Caco-2 (cell line): ENCODE measurements at regions of chr1 and their contacts with region 1.

Region 1: GRCh38 chr1:211752951-211753486 is 77.5 kb downstream of the LPGAT1 start:
- DNase-seq: no peak
- H3K4me3 ChIP-seq: no peak overlapping the region
- H3K4me3 Mint-ChIP-seq: no peak overlapping the region
- H3K27ac Mint-ChIP-seq: no peak overlapping the region
- H3K4me1 ChIP-seq: peaks cover 55% of the 10 kb centered on the region
- H3K4me1 Mint-ChIP-seq: peaks cover 41% of the 10 kb centered on the region
- H3K27me3 ChIP-seq: no peaks in the 10 kb centered on the region
- H3K27me3 Mint-ChIP-seq: no peaks in the 10 kb centered on the region
- CTCF ChIP-seq: no peak

Region 2: GRCh38 chr1:211830330-211831142 is 77.5 kb after region 1 on chr1 and contains the start of gene LPGAT1:
- CTCF ChIA-PET with region 1: interaction called, 3 read pairs
- POLR2A ChIA-PET with region 1: no interaction called
- intact Hi-C with region 1: loop called (anchors 5 kb)
- DNase-seq: peak; percentile 70 to 87
- H3K4me3 ChIP-seq: peak within 1 kb of the TSS; percentile 56
- H3K4me3 Mint-ChIP-seq: peak within 1 kb of the TSS; percentile 96
- H3K27ac Mint-ChIP-seq: peak within 1 kb of the TSS; percentile 76
- H3K4me1 ChIP-seq: no peaks in the 10 kb centered on the region
- H3K4me1 Mint-ChIP-seq: peaks cover 5% of the 10 kb centered on the region
- H3K27me3 ChIP-seq: no peaks in the 10 kb centered on the region
- H3K27me3 Mint-ChIP-seq: no peaks in the 10 kb centered on the region
- CTCF ChIP-seq: peak; percentile 49 to 55
- total RNA-seq, gene LPGAT1: 25.6 and 34.0 TPM in 2 replicates

Region 3: DNA sequence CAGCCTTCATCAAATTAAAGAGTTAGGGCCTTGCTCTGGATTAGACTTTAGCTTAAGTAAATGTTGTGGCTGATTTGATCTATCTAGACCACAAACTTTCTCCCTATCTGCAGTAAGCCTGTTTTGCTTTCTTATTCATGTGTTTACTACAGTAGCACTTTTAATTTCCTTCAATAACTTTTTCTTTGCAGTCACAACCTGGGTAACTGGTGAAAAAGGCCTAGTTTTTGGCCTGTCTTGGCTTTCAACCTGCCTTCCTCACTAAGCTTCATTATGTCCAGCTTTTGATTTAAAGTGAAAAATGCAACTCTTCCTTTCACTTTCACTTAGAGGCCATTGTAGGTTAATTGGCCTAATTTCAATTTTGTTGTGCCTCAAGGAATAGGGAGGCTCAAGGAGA is 90.0 kb after region 1 on chr1:
- CTCF ChIA-PET with region 1: no interaction called
- POLR2A ChIA-PET with region 1: interaction called, 12 read pairs
- intact Hi-C with region 1: no loop called
- DNase-seq: no peak
- H3K4me3 ChIP-seq: no peak overlapping the region
- H3K4me3 Mint-ChIP-seq: no peak overlapping the region
- H3K27ac Mint-ChIP-seq: no peak overlapping the region
- H3K4me1 ChIP-seq: no peaks in the 10 kb centered on the region
- H3K4me1 Mint-ChIP-seq: no peaks in the 10 kb centered on the region
- H3K27me3 ChIP-seq: no peaks in the 10 kb centered on the region
- H3K27me3 Mint-ChIP-seq: no peaks in the 10 kb centered on the region
- CTCF ChIP-seq: no peak